Transverse colon (tissue), 4 donors: ENCODE measurements at regions of chr10 and their contacts with region 1.

Region 1: DNA sequence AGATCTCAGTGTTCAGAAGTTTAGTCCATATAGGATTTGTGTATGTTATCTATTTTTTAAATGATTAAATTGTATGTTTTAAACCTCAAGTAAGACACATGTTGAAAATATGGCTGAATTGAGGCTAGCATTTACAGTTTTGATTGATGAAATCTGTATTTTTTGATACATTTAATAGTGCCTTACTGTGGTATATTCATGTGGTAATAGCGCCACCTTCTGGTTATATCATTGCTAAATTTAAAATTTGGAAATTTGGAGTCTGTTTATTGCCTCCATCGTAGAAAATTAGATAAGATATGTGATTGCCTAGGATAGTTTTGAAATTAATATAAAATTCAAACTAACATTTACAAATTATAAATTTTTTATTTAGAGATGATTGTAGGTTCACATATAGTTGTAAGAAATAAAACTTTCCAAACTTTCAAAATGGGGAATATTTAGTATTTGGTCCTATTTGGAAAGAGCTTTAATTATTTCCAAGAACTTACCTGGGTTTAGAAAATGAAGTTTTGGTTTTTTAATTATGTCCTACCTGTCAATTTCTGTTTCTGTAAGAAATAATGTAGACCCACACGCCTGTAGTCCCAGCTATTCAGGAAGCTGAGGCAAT is 19.1 kb upstream of the ARMS2 start:
- DNase-seq: no peak
- H3K4me3 ChIP-seq: no peak overlapping the region
- H3K27ac ChIP-seq: no peak overlapping the region
- H3K4me1 ChIP-seq: no peaks in the 10 kb centered on the region
- H3K27me3 ChIP-seq: no peaks in the 10 kb centered on the region
- CTCF ChIP-seq: peak; percentile 67 to 82 (median 73)
- EP300 ChIP-seq: no peak
- POLR2A ChIP-seq: no peak

Region 2: DNA sequence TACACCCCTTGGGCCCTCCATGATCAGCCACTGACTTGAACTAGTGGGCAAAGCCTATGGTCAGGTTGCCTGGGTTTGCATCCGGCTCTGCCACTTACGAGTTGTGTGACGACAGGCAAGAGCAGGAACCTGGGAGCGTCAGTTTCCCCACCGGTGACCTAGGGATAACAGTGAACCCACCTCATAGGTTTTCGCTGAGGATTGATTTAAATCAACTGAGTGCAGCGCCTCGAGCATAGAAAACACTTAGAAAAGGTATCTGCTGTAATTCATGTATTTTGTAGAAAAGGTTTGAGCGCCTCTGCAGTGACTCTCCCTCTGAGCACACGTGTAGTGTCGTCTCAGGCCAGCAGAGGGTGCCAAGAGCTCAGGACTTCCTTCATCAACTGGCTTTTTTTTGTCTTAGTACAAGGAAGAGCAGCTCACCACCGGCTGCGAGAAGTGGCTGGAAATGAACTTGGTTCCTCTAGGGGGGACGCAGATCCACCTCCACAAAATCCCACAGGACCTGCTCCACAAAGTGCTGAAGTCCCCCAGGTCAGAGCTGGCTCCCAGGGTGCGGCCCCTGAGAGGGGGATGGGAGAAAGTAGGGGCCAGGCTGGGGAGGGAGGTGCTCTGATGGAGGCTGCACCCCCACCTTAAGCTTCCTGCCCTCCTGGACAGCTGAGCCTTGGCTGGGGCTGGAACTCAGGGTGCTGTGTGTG is 136.6 kb before region 1 on chr10:
- in situ Hi-C with region 1: loop called (anchors 5 to 25 kb)
- intact Hi-C with region 1: loop called (anchors 1 kb)
- DNase-seq: peak; percentile 76
- H3K4me3 ChIP-seq: peak overlapping the region in 1 of 4 donors; percentile 25
- H3K27ac ChIP-seq: no peak overlapping the region
- H3K4me1 ChIP-seq: peaks cover 0 to 4% (median 0%) of the 10 kb centered on the region in 4 donors
- H3K27me3 ChIP-seq: no peaks in the 10 kb centered on the region
- CTCF ChIP-seq: peak; percentile 88 to 95 (median 93)
- EP300 ChIP-seq: no peak
- POLR2A ChIP-seq: no peak

Region 3: DNA sequence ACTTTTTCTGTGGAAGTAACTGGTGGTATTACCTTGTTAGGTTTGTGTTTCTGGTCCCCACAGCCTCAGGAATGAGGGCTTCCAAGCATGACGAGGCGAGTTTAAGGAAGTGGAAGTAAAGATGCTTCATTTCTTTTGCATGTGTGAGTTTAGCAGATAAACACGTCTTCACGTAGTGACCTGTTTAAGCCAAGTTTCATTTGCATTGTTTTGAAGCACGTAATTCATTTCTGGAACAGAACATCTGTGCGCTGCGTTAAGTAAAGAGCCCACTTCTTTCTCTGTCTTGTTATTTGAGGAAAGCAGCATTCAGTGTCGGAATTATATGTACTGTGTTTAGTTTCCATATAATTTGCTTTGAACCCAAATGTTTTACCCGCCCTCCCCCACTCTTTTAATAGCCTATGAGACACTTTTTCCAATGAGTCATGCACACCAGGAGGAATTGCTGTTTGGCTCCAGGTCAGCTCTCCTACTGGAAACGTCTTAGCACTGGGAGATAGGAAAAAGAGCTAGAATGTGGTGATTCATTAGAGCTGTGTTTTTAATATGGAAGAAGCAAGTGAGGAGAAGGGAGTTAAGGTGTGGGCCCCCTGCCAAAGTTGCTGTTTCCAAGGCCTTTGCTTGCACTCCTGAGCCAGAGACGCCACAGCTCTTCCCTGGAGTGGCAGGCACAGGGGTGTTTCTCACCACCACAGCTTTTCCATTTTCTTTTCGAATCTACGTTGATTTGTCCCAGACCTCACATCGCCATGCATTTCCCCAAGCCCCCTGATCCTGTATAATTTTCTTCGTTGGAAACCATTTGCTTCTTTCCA is 127.4 kb before region 1 on chr10:
- in situ Hi-C with region 1: loop called in 1 of 4 experiments (anchors 10 kb)
- intact Hi-C with region 1: no loop called
- DNase-seq: peak; percentile 41
- H3K4me3 ChIP-seq: peak overlapping the region in 1 of 4 donors; percentile 5
- H3K27ac ChIP-seq: peak overlapping the region; percentile 76 to 88 (median 80)
- H3K4me1 ChIP-seq: peaks cover 12 to 45% (median 37%) of the 10 kb centered on the region in 4 donors
- H3K27me3 ChIP-seq: no peaks in the 10 kb centered on the region
- CTCF ChIP-seq: no peak
- EP300 ChIP-seq: peak; percentile 85
- POLR2A ChIP-seq: no peak

Region 4: GRCh38 chr10:122342293-122343134 is 92.8 kb before region 1 on chr10:
- in situ Hi-C with region 1: loop called in 2 of 4 experiments (anchors 10 kb)
- intact Hi-C with region 1: loop called (anchors 5 kb)
- DNase-seq: peak; percentile 19
- H3K4me3 ChIP-seq: no peak overlapping the region
- H3K27ac ChIP-seq: peak overlapping the region in 3 of 4 donors; percentile 50 to 51 (median 50)
- H3K4me1 ChIP-seq: peaks cover 0 to 25% (median 20%) of the 10 kb centered on the region in 4 donors
- H3K27me3 ChIP-seq: no peaks in the 10 kb centered on the region
- CTCF ChIP-seq: peak; percentile 62 to 78 (median 64)
- EP300 ChIP-seq: no peak
- POLR2A ChIP-seq: no peak

Region 5: DNA sequence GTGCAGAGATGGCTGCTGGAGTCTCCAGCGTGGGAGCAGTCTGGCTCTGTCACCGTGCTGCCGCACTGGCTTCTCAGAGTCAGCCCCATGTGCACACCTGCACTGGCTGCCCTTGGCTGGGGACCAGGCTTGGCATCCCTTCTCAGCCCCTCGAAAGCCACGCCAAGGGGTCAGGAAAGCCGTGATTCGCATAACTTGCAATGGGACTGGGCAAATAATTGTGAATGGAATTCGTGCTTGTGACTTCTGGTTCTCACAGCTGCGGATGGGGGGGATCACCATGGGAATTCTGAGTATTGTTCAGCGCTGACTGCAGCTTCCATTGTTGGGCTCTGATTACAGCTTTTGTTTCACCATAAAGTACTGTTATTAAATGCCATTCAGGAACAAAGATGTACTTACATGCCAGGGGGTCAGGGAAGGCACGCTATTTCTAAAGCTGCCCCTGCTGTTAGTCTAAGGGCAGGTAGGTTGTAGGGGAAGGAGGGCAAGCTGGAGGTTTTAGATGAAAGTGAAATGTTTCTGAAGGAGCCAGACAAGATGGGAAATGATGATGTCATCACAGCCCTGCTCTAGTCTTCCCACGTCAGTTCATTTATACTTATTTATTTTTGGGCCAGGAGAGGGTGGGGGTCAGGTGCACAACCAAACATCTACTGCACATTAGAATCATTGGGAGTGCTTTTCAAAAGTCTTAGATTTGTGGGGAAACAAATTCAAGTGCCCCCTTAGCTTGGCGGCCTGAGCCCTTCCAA is 66.6 kb before region 1 on chr10:
- in situ Hi-C with region 1: no loop called
- intact Hi-C with region 1: no loop called
- DNase-seq: no peak
- H3K4me3 ChIP-seq: no peak overlapping the region
- H3K27ac ChIP-seq: no peak overlapping the region
- H3K4me1 ChIP-seq: peaks cover 6 to 9% (median 9%) of the 10 kb centered on the region in 4 donors
- H3K27me3 ChIP-seq: no peaks in the 10 kb centered on the region
- CTCF ChIP-seq: no peak
- EP300 ChIP-seq: no peak
- POLR2A ChIP-seq: no peak

Region 6: DNA sequence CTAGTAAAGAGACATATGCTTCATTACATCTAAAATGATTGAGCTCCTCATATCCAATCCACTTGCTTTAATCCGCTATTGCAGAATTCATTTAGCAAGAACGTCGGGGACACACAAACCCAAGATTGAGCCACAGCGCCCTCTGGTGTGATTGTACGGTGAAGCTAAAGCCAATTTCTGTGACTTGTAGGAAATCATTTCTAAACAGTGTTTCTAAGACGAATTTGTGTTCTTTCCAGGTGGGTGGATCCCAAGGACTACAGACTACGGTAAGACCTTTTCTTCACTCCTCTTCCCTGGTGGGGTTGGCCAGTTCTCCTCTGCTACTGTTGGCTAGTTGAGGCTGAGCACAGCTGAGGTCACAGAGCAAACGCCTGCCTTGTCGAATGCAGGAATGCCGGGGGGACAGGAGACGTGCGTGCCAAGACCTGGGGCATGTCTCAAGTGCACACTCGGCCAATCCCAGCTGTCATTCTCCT is 130.4 kb after region 1 on chr10:
- in situ Hi-C with region 1: loop called in 2 of 4 experiments (anchors 5 to 10 kb)
- intact Hi-C with region 1: loop called (anchors 10 kb)
- DNase-seq: peak; percentile 83
- H3K4me3 ChIP-seq: peak overlapping the region in 1 of 4 donors; percentile 7
- H3K27ac ChIP-seq: no peak overlapping the region
- H3K4me1 ChIP-seq: peaks cover 0 to 12% (median 2%) of the 10 kb centered on the region in 4 donors
- H3K27me3 ChIP-seq: peaks cover 8% of the 10 kb centered on the region
- CTCF ChIP-seq: peak; percentile 78 to 87 (median 81)
- EP300 ChIP-seq: no peak
- POLR2A ChIP-seq: no peak